T-cell (primary cell): ENCODE measurements at regions of chr1 and their contacts with region 1.

Region 1: DNA sequence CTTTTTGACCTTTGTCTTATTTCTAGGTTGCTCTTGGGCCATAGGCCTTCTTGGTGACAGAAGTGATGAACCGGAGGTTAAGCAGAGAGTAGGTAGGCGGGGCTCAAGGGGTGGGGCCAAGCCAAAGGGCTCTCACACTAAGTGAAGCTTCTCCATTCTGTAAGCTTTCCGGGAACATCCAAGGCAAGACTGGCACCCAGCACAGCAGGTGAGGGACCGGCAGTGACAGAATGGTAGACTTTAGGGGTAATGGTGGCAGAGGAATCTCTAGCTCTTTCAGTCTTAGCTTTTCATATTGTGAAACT is at the start of gene TNFAIP8L2:
- DNase-seq: peak; percentile 37 to 82 (median 67)
- ATAC-seq: peak; percentile 81 to 88 (median 85)
- H3K4me3 ChIP-seq: peak within 1 kb of the TSS; percentile 89 to 97
- H3K4me3 Mint-ChIP-seq: peak within 1 kb of the TSS; percentile 99 to 100 (median 100)
- H3K27ac ChIP-seq: peak within 1 kb of the TSS; percentile 68
- H3K27ac Mint-ChIP-seq: peak within 1 kb of the TSS; percentile 97 to 100
- H3K4me1 ChIP-seq: peaks cover 35 to 49% of the 10 kb centered on the region in 2 experiments
- H3K4me1 Mint-ChIP-seq: peaks cover 44 to 60% (median 57%) of the 10 kb centered on the region in 3 donors
- H3K27me3 ChIP-seq: no peaks in the 10 kb centered on the region
- H3K27me3 Mint-ChIP-seq: no peaks in the 10 kb centered on the region
- total RNA-seq, gene TNFAIP8L2: 3.7 to 41.2 (median 38.8) TPM

Region 2: DNA sequence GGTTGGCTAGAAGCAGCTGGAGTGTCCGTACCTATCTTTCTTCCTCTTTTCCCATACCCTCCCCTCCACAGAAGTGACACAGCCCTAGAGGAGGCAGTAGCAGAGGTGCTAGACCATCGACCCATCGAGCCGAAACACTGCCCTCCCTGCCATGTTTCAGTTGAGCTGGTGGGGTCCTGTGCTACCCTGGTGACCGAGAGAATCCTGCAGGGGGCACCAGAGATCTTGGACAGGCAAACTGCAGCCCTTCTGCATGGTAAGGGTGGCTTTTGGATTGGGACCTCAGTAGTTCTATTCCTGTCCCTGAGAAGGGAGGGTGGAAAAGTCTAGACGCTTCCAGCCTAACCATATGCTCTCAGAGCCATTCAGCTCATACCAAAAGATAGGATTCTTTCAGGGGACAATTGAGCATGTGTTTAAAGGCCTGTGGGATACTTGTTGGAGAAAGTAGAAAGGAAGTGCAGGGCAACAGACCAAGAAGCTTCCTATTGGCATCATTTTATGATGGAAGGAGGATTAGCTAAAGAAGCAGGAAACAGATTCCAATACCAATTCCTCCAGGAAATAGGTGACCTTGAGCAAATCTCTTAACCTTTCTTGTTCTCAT is 131.8 kb before region 1 on chr1:
- CTCF ChIA-PET with region 1: interaction called, 5 to 10 read pairs
- POLR2A ChIA-PET with region 1: interaction called, 4 read pairs
- DNase-seq: peak; percentile 72 to 92 (median 85)
- ATAC-seq: peak; percentile 99 to 100 (median 100)
- H3K4me3 ChIP-seq: no peak overlapping the region
- H3K4me3 Mint-ChIP-seq: peak overlapping the region in 2 of 3 donors; percentile 23 to 43
- H3K27ac ChIP-seq: no peak overlapping the region
- H3K27ac Mint-ChIP-seq: peak overlapping the region; percentile 31 to 36
- H3K4me1 ChIP-seq: peaks cover 0 to 7% of the 10 kb centered on the region in 2 experiments
- H3K4me1 Mint-ChIP-seq: peaks cover 6 to 16% (median 8%) of the 10 kb centered on the region in 3 donors
- H3K27me3 ChIP-seq: no peaks in the 10 kb centered on the region
- H3K27me3 Mint-ChIP-seq: no peaks in the 10 kb centered on the region

Region 3: DNA sequence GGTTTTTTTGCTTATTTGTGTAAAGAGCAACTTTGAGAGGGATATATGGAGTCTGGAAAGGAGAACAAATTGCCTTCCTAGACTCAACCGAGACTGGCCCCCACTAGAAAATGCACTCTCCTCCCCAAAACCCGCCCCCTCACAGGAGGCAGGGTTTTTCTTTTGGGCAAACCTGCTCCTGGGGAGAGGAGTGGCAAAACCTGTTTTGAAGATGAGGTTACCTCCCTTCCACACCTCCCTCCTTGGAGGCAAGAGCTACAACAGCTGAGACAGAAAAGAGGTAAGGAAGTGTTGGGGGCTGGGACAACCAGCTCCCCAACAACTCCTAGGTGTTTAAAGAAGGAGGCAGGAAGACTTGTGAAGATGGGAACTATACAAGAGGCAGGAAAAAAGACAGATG is 120.1 kb before region 1 on chr1 and contains the start of gene BNIPL:
- CTCF ChIA-PET with region 1: no interaction called
- POLR2A ChIA-PET with region 1: no interaction called
- DNase-seq: no peak
- ATAC-seq: no peak
- H3K4me3 ChIP-seq: no peak within 1 kb of the TSS
- H3K4me3 Mint-ChIP-seq: no peak within 1 kb of the TSS
- H3K27ac ChIP-seq: no peak within 1 kb of the TSS
- H3K27ac Mint-ChIP-seq: peak within 1 kb of the TSS; percentile 63 to 82
- H3K4me1 ChIP-seq: no peaks in the 10 kb centered on the region
- H3K4me1 Mint-ChIP-seq: peaks cover 9 to 20% (median 11%) of the 10 kb centered on the region in 3 donors
- H3K27me3 ChIP-seq: no peaks in the 10 kb centered on the region
- H3K27me3 Mint-ChIP-seq: no peaks in the 10 kb centered on the region
- total RNA-seq, gene BNIPL: 0.54 to 2.6 (median 2.2) TPM

Region 4: DNA sequence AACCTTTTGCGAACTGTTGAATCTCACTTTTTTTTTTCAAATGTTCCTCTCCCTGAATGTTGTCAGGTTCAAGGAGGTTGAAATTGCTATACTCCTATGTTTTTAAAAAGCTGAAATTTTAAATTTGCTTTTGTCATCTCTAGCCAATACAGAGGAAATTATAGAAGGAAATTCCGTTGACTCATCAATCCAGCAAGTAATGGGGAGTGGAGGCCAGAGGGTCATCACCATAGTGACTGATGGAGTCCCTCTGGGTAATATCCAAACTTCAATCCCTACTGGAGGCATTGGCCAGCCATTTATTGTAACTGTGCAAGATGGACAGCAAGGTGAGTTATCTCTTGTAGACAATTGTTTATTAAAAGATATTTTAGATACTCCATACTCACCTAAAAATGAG is 49.6 kb before region 1 on chr1:
- CTCF ChIA-PET with region 1: interaction called in 1 of 2 experiments, 144 read pairs
- POLR2A ChIA-PET with region 1: no interaction called
- DNase-seq: no peak
- ATAC-seq: no peak
- H3K4me3 ChIP-seq: no peak overlapping the region
- H3K4me3 Mint-ChIP-seq: no peak overlapping the region
- H3K27ac ChIP-seq: no peak overlapping the region
- H3K27ac Mint-ChIP-seq: no peak overlapping the region
- H3K4me1 ChIP-seq: no peaks in the 10 kb centered on the region
- H3K4me1 Mint-ChIP-seq: no peaks in the 10 kb centered on the region
- H3K27me3 ChIP-seq: no peaks in the 10 kb centered on the region
- H3K27me3 Mint-ChIP-seq: no peaks in the 10 kb centered on the region